Common myeloid progenitor, CD34-positive (primary cell): ENCODE measurements at regions of chr1 and their contacts with region 1.

Region 1: GRCh38 chr1:200279810-200280411 is 129.9 kb downstream of the ZNF281 start:
- DNase-seq: peak in 1 of 3 donors; percentile 32
- H3K4me3 ChIP-seq: no peak overlapping the region
- H3K27ac ChIP-seq: no peak overlapping the region
- H3K4me1 ChIP-seq: peaks cover 0 to 15% (median 3%) of the 10 kb centered on the region in 4 experiments
- H3K27me3 ChIP-seq: no peaks in the 10 kb centered on the region

Region 2: DNA sequence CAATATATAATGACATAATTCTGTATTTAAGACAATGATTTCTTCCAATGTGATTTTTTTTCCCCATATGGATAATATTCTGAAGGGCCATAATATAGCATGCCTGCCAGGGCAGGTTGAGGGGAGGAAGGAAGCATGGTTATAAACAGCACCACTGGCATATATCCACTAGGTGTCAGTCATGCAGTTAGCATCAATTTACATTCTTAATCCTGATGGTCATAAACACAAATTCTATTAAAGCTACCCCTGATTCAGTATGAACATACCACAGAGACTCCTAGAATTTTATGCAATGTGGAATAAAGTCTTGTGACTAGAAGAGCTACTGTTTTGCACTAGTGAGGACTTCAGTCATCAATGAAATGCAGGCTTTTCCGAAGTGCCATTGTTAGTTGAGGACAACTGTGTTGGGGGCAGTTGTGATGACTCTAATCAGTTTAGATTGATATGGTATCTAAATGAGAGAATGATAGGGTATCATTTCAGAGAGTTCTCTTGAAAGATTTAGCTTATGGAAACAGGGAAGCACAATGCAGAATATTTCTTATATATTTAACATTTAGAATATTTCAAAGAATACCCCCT is 595.1 kb before region 1 on chr1:
- CTCF ChIA-PET with region 1: interaction called, 32 read pairs
- POLR2A ChIA-PET with region 1: no interaction called
- DNase-seq: peak; percentile 63 to 80 (median 75)
- H3K4me3 ChIP-seq: no peak overlapping the region
- H3K27ac ChIP-seq: no peak overlapping the region
- H3K4me1 ChIP-seq: peaks cover 0 to 16% (median 0%) of the 10 kb centered on the region in 4 experiments
- H3K27me3 ChIP-seq: no peaks in the 10 kb centered on the region

Region 3: DNA sequence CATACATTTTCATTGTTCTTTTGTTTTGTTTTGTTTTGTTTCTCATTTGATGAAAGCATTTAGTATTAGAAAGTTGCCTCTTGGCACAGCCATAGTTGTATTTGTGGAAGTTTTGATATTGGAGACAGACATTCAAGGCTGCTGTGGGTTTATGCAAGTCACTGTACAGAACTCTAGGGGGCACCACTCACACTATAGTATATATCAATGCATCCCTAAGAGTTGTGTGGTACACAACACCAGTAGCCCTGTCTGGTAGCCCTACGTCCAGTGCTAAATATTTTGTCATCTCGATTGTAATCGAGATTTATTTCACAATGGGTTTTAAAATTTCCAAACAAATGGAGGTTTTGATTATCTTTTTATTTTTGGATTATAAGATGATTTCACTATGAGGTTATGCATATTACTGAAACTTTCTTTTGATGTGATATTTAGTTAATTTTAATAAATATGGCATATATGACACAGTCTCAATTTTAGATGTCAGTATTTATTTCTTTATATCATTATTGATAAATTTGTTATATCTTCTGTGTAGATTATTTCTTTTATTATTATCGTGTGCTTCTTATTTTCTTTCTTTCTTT is 140.2 kb before region 1 on chr1:
- CTCF ChIA-PET with region 1: interaction called, 16 read pairs
- POLR2A ChIA-PET with region 1: no interaction called
- DNase-seq: peak; percentile 61 to 75 (median 75)
- H3K4me3 ChIP-seq: no peak overlapping the region
- H3K27ac ChIP-seq: no peak overlapping the region
- H3K4me1 ChIP-seq: peaks cover 0 to 7% (median 0%) of the 10 kb centered on the region in 4 experiments
- H3K27me3 ChIP-seq: no peaks in the 10 kb centered on the region

Region 4: GRCh38 chr1:200294241-200294640 is 14.3 kb after region 1 on chr1:
- CTCF ChIA-PET with region 1: interaction called, 10 read pairs
- POLR2A ChIA-PET with region 1: no interaction called
- DNase-seq: no peak
- H3K4me3 ChIP-seq: no peak overlapping the region
- H3K27ac ChIP-seq: no peak overlapping the region
- H3K4me1 ChIP-seq: no peaks in the 10 kb centered on the region
- H3K27me3 ChIP-seq: no peaks in the 10 kb centered on the region

Region 5: GRCh38 chr1:200488375-200489165 is 208.7 kb after region 1 on chr1:
- CTCF ChIA-PET with region 1: interaction called, 10 read pairs
- POLR2A ChIA-PET with region 1: no interaction called
- DNase-seq: peak; percentile 55 to 78 (median 78)
- H3K4me3 ChIP-seq: no peak overlapping the region
- H3K27ac ChIP-seq: no peak overlapping the region
- H3K4me1 ChIP-seq: peaks cover 0 to 3% (median under 1%) of the 10 kb centered on the region in 4 experiments
- H3K27me3 ChIP-seq: no peaks in the 10 kb centered on the region

Region 6: DNA sequence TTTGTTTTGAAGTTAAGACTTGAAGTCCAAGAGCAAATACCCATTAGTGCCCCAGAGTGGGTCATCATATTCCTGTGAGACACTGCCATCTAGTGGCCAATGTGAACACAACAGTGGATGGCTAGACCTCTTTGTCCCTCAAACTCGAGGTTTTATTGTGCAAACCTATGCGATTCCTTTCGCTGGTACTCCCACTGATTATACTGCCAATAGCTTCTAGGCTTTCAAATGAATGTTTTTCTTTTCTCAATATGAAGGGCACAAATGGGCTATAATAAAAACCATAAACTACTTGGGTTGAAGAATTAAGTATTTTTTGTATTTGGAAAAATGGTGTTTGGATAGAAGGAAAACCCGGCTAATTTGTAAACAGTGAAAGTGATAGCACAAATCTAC is 230.3 kb after region 1 on chr1:
- CTCF ChIA-PET with region 1: interaction called, 14 read pairs
- POLR2A ChIA-PET with region 1: no interaction called
- DNase-seq: peak; percentile 73 to 87 (median 81)
- H3K4me3 ChIP-seq: no peak overlapping the region
- H3K27ac ChIP-seq: no peak overlapping the region
- H3K4me1 ChIP-seq: no peaks in the 10 kb centered on the region
- H3K27me3 ChIP-seq: peaks cover 0 to 6% (median 0%) of the 10 kb centered on the region in 5 experiments